Activated CD4-positive, alpha-beta memory T cell treated with anti-CD3 and anti-CD28 coated beads for 36 hours (primary cell): ENCODE measurements at regions of chr16 and their contacts with region 1.

Region 1: GRCh38 chr16:30941600-30942425 is 7.1 kb upstream of the ORAI3 start:
- DNase-seq: peak; percentile 84
- H3K4me3 Mint-ChIP-seq: peak overlapping the region; percentile 32
- H3K27ac Mint-ChIP-seq: peak overlapping the region; percentile 72
- H3K4me1 Mint-ChIP-seq: peaks cover 18% of the 10 kb centered on the region
- H3K27me3 Mint-ChIP-seq: no peaks in the 10 kb centered on the region

Region 2: GRCh38 chr16:30893744-30894539 is 47.9 kb before region 1 on chr16 and contains the start of gene BCL7C:
- CTCF ChIA-PET with region 1: interaction called, 6 read pairs
- POLR2A ChIA-PET with region 1: no interaction called
- intact Hi-C with region 1: loop called (anchors 2 kb)
- DNase-seq: peak; percentile 92
- H3K4me3 Mint-ChIP-seq: peak within 1 kb of the TSS; percentile 85
- H3K27ac Mint-ChIP-seq: peak within 1 kb of the TSS; percentile 74
- H3K4me1 Mint-ChIP-seq: peaks cover 38% of the 10 kb centered on the region
- H3K27me3 Mint-ChIP-seq: no peaks in the 10 kb centered on the region
- total RNA-seq, gene BCL7C: 25.6 to 25.7 TPM

Region 3: DNA sequence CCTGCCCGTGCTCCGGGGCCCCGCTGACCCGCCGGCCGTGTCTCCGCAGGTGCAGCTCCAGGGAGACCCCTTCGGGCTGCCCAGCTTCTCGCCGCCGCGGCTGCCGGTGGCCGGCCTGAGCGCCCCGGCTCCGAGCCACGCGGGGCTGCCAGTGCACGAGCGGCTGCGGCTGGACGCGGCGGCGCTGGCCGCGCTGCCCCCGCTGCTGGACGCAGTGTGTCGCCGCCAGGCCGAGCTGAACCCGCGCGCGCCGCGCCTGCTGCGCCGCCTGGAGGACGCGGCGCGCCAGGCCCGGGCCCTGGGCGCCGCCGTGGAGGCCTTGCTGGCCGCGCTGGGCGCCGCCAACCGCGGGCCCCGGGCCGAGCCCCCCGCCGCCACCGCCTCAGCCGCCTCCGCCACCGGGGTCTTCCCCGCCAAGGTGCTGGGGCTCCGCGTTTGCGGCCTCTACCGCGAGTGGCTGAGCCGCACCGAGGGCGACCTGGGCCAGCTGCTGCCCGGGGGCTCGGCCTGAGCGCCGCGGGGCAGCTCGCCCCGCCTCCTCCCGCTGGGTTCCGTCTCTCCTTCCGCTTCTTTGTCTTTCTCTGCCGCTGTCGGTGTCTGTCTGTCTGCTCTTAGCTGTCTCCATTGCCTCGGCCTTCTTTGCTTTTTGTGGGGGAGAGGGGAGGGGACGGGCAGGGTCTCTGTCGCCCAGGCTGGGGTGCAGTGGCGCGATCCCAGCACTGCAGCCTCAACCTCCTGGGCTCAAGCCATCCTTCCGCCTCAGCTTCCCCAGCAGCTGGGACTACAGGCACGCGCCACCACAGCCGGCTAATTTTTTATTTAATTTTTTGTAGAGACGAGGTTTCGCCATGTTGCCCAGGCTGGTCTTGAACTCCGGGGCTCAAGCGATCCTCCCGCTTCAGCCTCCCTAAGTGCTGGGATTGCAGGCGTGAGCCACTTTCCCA is 39.5 kb before region 1 on chr16:
- CTCF ChIA-PET with region 1: interaction called, 27 read pairs
- POLR2A ChIA-PET with region 1: no interaction called
- intact Hi-C with region 1: loop called (anchors 2 kb)
- DNase-seq: peak; percentile 69
- H3K4me3 Mint-ChIP-seq: peak overlapping the region; percentile 93
- H3K27ac Mint-ChIP-seq: peak overlapping the region; percentile 95
- H3K4me1 Mint-ChIP-seq: peaks cover 27% of the 10 kb centered on the region
- H3K27me3 Mint-ChIP-seq: no peaks in the 10 kb centered on the region